ENCODE measurements at regions of chr22 and their contacts with region 1.

Region 1: GRCh38 chr22:49807780-49808708 is 19.6 kb downstream of the BRD1 start:
- DNase-seq: peak; percentile 60
- H3K4me3 Mint-ChIP-seq: peak overlapping the region; percentile 11
- H3K27ac Mint-ChIP-seq: peak overlapping the region; percentile 66
- H3K4me1 Mint-ChIP-seq: peaks cover 59% of the 10 kb centered on the region
- H3K27me3 Mint-ChIP-seq: no peaks in the 10 kb centered on the region

Region 2: GRCh38 chr22:49880281-49880680 is 72.2 kb after region 1 on chr22:
- intact Hi-C with region 1: loop called (anchors 10 kb)
- DNase-seq: peak; percentile 31
- H3K4me3 Mint-ChIP-seq: peak overlapping the region; percentile 62
- H3K27ac Mint-ChIP-seq: peak overlapping the region; percentile 81
- H3K4me1 Mint-ChIP-seq: peaks cover 40% of the 10 kb centered on the region
- H3K27me3 Mint-ChIP-seq: no peaks in the 10 kb centered on the region

Region 3: GRCh38 chr22:49903322-49904039 is 95.4 kb after region 1 on chr22:
- intact Hi-C with region 1: no loop called
- DNase-seq: no peak
- H3K4me3 Mint-ChIP-seq: no peak overlapping the region
- H3K27ac Mint-ChIP-seq: no peak overlapping the region
- H3K4me1 Mint-ChIP-seq: peaks cover 1% of the 10 kb centered on the region
- H3K27me3 Mint-ChIP-seq: no peaks in the 10 kb centered on the region

Measured in activated T-helper 2 cell treated with anti-CD3 and anti-CD28 coated beads, Interferon-gamma antibody, Interleukin-2, Interleukin-4, amounts not matched to agents 10 μg/mL and 5 μg/mL and 100 μg/mL, durations not matched to agents 14 hours and 24 hours and 36 hours (primary cell).